PC-9 (cell line): ENCODE measurements at regions of chr2 and their contacts with region 1.

Region 1: DNA sequence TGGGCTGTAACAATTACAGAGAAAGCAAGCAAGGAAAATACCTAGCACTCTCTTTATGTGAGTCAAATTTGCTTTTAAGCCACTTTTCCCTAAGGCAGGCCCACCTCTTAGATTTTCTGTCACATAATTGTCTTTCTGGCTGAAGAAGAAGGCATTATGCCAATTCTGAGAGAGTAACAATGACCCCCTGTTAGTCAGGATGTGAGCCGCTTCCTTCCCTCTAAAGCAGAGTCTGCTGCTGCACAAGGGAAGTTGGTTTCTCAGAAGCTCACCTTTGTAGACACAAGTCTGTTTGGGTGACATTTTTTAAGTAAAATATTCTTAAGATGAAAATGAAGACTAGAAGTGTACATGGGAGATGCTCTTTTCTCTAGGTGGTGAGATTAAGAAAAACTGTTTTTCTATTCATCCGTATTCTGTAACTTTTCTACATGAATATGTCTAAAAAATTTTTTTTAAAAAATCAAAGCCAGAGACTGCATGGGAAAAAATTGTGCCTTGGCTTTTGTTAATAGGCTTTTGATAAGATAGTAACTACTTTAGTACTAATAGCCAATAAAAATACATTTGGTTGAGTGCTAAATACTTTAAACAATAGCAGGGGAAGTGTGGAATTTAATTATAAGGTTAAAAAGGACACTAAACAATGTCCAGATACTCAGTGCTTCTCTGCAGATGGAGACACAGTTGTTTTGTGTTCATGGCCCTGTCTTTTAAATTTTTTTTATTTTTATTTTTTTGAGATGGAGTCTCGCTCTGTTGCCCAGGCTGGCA is 33.4 kb upstream of the VPS54 start:
- DNase-seq: no peak
- H3K4me3 ChIP-seq: no peak overlapping the region
- H3K27ac ChIP-seq: no peak overlapping the region
- H3K4me1 ChIP-seq: peaks cover 4% of the 10 kb centered on the region; the same call in 1 of the 2 replicates
- H3K27me3 ChIP-seq: no peaks in the 10 kb centered on the region
- CTCF ChIP-seq: no peak

Region 2: GRCh38 chr2:63272560-63272959 is 780.1 kb before region 1 on chr2:
- CTCF ChIA-PET with region 1: no interaction called
- POLR2A ChIA-PET with region 1: no interaction called
- intact Hi-C with region 1: no loop called
- DNase-seq: no peak
- H3K4me3 ChIP-seq: no peak overlapping the region
- H3K27ac ChIP-seq: no peak overlapping the region
- H3K4me1 ChIP-seq: no peaks in the 10 kb centered on the region
- H3K27me3 ChIP-seq: no peaks in the 10 kb centered on the region
- CTCF ChIP-seq: no peak

Region 3: DNA sequence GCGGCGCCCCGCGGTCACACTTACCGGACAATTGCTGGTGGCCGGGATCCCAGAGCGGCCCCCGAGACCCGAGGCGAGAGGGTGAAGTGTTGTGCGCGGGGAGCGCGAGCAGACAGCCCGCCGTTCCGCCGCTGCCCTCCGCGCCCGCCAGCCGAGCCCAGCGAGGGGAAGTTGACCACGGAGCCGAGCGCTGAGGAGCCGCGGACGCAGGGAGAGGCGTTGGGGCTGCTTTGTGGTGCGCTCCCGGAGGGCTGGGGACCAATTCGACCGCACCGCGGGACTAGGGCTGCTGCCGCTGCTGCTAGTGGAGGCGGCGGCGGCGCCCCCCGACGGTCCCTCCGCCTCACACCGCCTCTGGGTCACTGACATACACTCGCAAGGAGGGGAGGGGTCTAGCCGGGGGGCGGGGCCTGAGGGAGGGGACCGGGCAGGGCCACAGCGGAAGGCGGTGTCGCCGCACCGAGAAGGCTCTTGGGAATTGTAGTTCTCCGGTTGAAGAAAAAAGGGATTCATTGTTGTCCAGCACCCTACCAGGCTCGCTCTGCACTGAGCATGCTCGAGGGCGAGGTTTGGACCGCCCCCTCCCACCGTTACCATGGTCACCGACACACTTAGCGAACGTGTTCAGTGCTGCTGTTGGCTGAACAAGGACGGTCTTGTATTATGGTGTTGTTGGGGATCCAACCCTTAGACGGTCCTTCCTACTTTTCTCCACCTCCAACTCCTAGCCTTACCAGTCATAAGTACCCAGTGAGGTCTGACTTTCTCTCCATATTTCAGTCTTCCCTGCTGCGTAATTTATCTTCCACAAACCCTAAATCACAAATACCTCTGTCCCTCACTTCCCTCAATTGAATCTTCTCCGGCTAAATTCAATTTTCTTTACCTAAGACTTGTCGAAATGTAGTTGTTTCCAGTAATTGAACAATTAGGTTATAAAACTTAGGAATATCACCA is 91.7 kb after region 1 on chr2 and contains the start of gene PELI1:
- CTCF ChIA-PET with region 1: no interaction called
- POLR2A ChIA-PET with region 1: no interaction called
- intact Hi-C with region 1: loop called (anchors 2 kb)
- DNase-seq: peak; percentile 98 to 99
- H3K4me3 ChIP-seq: peak within 1 kb of the TSS; percentile 80
- H3K27ac ChIP-seq: no peak within 1 kb of the TSS
- H3K4me1 ChIP-seq: peaks cover 36% of the 10 kb centered on the region
- H3K27me3 ChIP-seq: no peaks in the 10 kb centered on the region
- CTCF ChIP-seq: peak; percentile 40; the same call in 1 of the 2 replicates
- total RNA-seq, gene PELI1: 32.6 and 33.1 TPM in 2 replicates

Region 4: DNA sequence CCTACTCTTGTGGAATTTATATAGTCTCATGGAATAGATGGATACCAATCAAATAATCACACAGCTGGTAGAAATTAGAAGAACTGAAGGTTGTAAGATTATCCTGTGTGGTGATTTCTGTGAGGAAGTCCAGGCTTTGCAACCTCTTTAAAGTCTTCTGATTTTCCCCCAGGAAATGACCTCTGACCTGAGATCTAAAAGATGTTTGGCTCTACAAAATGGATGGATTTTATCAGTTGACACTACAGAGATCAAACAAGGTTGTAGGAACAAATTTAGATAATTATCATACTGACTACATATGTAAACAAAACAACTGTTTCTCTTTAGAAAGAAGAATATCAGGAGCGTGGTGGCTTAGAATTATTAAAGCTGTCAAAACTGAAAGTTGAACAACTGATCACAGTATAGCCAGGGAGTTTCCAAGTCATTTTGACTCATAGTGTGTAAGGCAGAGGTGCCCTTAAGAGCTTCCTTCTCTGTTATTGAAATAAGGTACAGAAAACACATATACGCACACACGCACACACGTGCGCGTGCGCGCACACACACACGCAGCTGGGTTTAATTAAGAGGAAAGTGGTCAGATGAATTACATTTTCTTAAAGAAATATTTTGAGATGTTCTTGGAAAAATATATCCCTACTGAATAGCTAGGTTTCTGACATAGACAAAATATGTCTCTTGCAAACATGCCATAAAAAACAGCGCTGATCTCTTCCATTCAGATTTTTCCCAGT is 127.1 kb after region 1 on chr2:
- CTCF ChIA-PET with region 1: no interaction called
- POLR2A ChIA-PET with region 1: no interaction called
- intact Hi-C with region 1: no loop called
- DNase-seq: no peak
- H3K4me3 ChIP-seq: no peak overlapping the region
- H3K27ac ChIP-seq: no peak overlapping the region
- H3K4me1 ChIP-seq: 0 out of 2 replicates have a peak, but pooled peaks cover 4% of the 10 kb centered on the region
- H3K27me3 ChIP-seq: no peaks in the 10 kb centered on the region
- CTCF ChIP-seq: no peak

Region 5: GRCh38 chr2:64439194-64439593 is 386.5 kb after region 1 on chr2:
- CTCF ChIA-PET with region 1: no interaction called
- POLR2A ChIA-PET with region 1: interaction called, 15 read pairs
- intact Hi-C with region 1: no loop called
- DNase-seq: no peak
- H3K4me3 ChIP-seq: no peak overlapping the region
- H3K27ac ChIP-seq: no peak overlapping the region
- H3K4me1 ChIP-seq: 0 out of 2 replicates have a peak, but pooled peaks cover 4% of the 10 kb centered on the region
- H3K27me3 ChIP-seq: no peaks in the 10 kb centered on the region
- CTCF ChIP-seq: no peak

Region 6: GRCh38 chr2:64523666-64524603 is 471.3 kb after region 1 on chr2 and contains the start of gene AFTPH:
- CTCF ChIA-PET with region 1: no interaction called
- POLR2A ChIA-PET with region 1: no interaction called
- intact Hi-C with region 1: loop called (anchors 1 kb)
- DNase-seq: peak; percentile 98 to 99
- H3K4me3 ChIP-seq: peak within 1 kb of the TSS; percentile 67
- H3K27ac ChIP-seq: peak within 1 kb of the TSS; percentile 72
- H3K4me1 ChIP-seq: peaks cover 18% of the 10 kb centered on the region
- H3K27me3 ChIP-seq: no peaks in the 10 kb centered on the region
- CTCF ChIP-seq: no peak
- total RNA-seq, gene AFTPH: 34.4 and 40.5 TPM in 2 replicates

Region 7: GRCh38 chr2:64888591-64889309 is 836.1 kb after region 1 on chr2:
- CTCF ChIA-PET with region 1: no interaction called
- POLR2A ChIA-PET with region 1: no interaction called
- intact Hi-C with region 1: loop called (anchors 2 kb)
- DNase-seq: peak; percentile 80 to 92
- H3K4me3 ChIP-seq: no peak overlapping the region
- H3K27ac ChIP-seq: no peak overlapping the region
- H3K4me1 ChIP-seq: peaks cover 8% of the 10 kb centered on the region
- H3K27me3 ChIP-seq: no peaks in the 10 kb centered on the region
- CTCF ChIP-seq: peak; percentile 79